Esophagus muscularis mucosa (tissue), 4 donors: ENCODE measurements at regions of chr1 and their contacts with region 1.

Region 1: DNA sequence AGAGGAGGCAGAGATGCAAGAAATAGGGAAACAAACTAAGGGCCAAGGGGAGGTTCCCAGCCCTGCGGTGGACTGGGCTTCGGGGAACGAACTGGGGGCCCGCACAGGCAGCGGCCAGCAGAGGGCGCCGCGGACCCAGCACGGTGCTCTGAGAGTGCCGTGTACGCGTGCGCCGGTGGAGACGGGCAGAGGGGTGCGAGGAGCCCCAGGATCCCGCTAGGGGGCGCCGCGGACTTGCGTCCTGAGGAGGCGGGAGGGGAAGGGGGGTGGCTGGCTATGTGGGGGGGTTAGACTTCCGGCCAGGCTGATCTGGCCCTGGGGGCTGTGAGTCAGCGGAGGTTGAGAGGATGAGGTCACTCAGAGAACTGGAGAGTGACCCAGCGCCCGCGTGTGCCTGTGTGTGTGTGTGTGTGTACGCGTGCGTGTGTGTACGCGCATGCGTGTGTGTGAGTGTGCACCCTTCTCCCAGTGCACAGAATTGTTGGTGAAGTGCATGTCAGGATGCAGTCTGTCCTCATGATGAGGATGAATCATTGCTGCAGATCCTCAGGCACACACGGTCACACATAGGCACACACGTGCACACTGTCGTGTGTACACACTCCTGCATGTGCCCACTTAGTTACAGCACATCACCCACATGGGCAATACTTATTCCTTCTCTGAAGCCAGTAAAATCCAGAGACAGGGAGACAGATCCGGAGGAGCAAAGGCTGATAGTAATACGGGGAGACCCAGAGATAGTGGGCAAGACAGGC is 17.0 kb downstream of the NES start:
- DNase-seq: peak; percentile 98
- H3K4me3 ChIP-seq: peak overlapping the region in 3 of 4 donors; percentile 15 to 38 (median 15)
- H3K27ac ChIP-seq: peak overlapping the region; percentile 78 to 85 (median 82)
- H3K4me1 ChIP-seq: peaks cover 75 to 85% (median 81%) of the 10 kb centered on the region in 4 donors
- H3K27me3 ChIP-seq: peaks cover 0 to 20% (median 6%) of the 10 kb centered on the region in 4 donors
- CTCF ChIP-seq: peak; percentile 99
- EP300 ChIP-seq: no peak
- POLR2A ChIP-seq: peak; percentile 18

Region 2: GRCh38 chr1:156583821-156584622 is 76.2 kb before region 1 on chr1:
- intact Hi-C with region 1: loop called (anchors 10 kb)
- DNase-seq: no peak
- H3K4me3 ChIP-seq: no peak overlapping the region
- H3K27ac ChIP-seq: no peak overlapping the region
- H3K4me1 ChIP-seq: peaks cover 0 to 8% (median 6%) of the 10 kb centered on the region in 4 donors
- H3K27me3 ChIP-seq: no peaks in the 10 kb centered on the region
- CTCF ChIP-seq: peak; percentile 94 to 97 (median 95)
- EP300 ChIP-seq: no peak
- POLR2A ChIP-seq: no peak

Region 3: DNA sequence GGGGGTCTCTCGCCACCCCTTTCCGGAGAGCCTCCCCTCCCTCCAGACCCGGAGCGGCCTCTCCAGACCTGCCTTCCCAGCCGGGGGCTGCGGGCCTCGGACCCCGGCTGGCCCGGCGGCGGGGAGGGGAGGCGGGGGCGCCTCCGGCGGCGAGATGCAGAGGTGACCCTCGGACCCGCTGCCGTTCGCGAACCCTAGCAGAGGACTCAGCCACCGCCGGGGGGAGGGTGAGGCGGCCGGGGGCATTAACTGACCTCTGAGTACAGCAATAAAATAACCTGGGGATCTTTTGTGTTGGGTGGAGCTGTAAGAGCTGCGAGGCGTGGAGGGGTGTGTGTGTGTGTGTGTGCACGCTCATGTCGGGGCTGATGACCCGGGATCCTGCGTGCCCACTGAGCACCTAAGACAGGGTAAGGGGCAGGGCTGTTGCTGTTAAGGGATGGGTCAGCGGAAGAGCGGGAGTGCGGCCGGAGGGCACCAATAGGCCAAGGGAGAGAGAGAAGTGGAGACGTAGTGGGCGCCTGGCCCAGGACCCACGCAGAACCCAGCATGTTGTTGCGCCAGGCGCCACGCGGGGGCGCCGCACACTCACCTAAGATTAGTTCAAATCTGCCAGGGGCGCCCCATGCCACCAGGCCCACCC is 34.6 kb before region 1 on chr1:
- intact Hi-C with region 1: loop called (anchors 1 kb)
- DNase-seq: no peak
- H3K4me3 ChIP-seq: peak overlapping the region; percentile 43 to 61 (median 52)
- H3K27ac ChIP-seq: peak overlapping the region in 2 of 4 donors; percentile 60 to 74
- H3K4me1 ChIP-seq: peaks cover 24 to 28% (median 26%) of the 10 kb centered on the region in 4 donors
- H3K27me3 ChIP-seq: peaks cover 10 to 76% (median 36%) of the 10 kb centered on the region in 4 donors
- CTCF ChIP-seq: peak; percentile 72 to 88 (median 76)
- EP300 ChIP-seq: no peak
- POLR2A ChIP-seq: no peak

Region 4: DNA sequence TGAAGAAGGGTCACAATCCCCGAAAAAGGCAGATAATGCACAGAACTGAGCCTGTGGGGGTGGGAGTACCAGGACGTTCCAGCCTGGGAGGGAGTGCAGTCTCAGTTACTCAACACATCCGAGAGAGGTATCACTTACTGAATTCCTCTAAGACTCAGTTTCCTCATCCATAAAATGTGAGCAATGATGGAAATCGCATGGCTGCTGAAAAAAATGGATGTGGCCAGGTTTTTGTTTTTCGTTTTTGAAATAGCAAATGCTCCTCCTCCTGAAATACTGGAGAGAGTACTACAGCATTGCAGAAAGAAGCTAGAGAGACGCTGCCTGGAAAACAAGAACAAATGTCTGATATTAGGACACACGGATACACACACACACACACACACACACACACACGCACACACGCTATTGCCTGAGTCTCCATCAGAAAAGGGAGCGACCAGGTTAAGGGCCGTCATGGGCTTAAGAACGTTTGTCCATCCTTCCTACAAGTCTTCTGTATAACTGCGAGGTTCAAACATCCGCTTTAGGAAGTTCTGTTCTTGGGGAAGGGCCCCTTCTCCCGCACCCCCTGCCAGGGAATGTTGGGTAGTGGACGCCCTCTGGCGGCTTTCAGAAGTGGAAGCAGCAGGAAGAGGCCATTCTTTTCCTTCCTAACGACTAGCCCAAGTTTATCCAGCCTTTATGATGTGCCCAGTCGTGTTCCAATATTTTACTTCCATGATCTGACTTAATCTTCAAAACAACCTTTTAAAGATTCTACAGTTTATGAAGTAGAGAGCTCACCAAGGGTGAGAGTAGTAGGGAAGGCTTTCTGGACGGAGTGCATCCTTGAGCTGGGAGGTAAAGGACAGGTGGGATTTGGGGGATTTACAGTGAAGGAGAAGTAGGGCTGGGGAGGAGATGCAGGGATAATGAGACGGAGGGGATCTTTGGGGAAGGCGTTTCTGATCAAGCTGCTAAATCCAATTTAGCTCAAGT is 17.7 kb after region 1 on chr1:
- intact Hi-C with region 1: loop called (anchors 1 kb)
- DNase-seq: no peak
- H3K4me3 ChIP-seq: peak overlapping the region; percentile 49 to 57 (median 56)
- H3K27ac ChIP-seq: peak overlapping the region; percentile 64 to 83 (median 79)
- H3K4me1 ChIP-seq: peaks cover 36 to 53% (median 52%) of the 10 kb centered on the region in 4 donors
- H3K27me3 ChIP-seq: peaks cover 0 to 45% (median 6%) of the 10 kb centered on the region in 4 donors
- CTCF ChIP-seq: peak; percentile 83 to 93 (median 92)
- EP300 ChIP-seq: no peak
- POLR2A ChIP-seq: no peak